ENCODE measurements at regions of chr12 and their contacts with region 1.

Region 1: DNA sequence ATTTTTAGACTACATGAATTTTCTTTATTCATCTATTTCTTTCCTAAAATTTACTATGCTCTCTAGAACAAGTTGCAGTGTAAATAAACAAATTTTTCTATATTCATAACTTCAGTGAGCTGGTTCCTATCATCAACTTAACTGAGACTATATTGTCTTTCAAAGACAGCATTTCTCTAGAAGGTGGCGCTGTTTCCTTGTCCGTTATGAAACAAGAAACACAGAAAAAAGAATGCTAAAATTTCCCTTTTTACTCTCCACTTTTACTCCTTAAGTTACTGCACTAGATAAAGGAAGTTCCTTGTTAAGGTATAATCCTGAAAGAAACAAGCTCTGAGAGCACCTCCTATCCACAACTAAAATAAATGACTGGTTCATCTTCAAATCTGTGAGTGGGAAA is 8.2 kb upstream of the CLEC2A start:
- DNase-seq: peak; percentile 48
- ATAC-seq: no peak
- H3K4me3 Mint-ChIP-seq: no peak overlapping the region
- H3K27ac Mint-ChIP-seq: no peak overlapping the region
- H3K4me1 Mint-ChIP-seq: peaks cover 19% of the 10 kb centered on the region
- H3K27me3 Mint-ChIP-seq: peaks cover 13% of the 10 kb centered on the region

Region 2: DNA sequence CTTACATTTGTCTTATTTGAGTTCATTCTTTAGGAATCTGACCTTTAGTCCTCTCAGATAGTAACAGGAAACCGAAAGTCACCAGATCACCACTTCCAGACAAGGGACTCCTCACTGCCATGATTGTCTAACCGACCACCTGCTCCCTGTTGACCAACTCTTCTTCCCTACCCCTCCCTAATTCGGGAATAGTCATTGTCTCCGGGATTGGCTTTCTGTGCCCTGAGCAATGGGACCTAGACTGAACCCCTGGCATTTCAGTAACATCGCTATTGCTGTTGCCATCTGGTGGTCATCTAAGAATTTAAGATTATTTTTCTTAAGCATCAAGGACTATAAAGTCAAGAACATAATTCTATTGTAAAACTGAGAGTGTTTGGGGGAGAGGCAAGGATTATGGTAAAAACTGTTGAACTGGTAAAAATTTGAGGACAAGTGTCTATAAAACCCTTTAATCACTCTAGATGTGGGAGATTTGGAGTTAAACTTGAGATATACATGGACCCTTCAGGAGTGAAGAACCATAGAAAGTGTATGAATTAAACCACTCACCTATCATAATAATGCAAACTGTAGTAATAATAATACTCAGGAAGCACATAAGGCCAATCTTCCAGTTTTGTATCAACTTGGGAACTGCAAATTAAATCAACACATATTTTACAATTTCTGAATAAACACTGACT is 14.5 kb before region 1 on chr12:
- CTCF ChIA-PET with region 1: interaction called, 24 read pairs
- POLR2A ChIA-PET with region 1: no interaction called
- DNase-seq: peak; percentile 33
- ATAC-seq: peak; percentile 69
- H3K4me3 Mint-ChIP-seq: peak overlapping the region; percentile 60
- H3K27ac Mint-ChIP-seq: peak overlapping the region; percentile 77
- H3K4me1 Mint-ChIP-seq: peaks cover 37% of the 10 kb centered on the region
- H3K27me3 Mint-ChIP-seq: peaks cover 7% of the 10 kb centered on the region

Region 3: DNA sequence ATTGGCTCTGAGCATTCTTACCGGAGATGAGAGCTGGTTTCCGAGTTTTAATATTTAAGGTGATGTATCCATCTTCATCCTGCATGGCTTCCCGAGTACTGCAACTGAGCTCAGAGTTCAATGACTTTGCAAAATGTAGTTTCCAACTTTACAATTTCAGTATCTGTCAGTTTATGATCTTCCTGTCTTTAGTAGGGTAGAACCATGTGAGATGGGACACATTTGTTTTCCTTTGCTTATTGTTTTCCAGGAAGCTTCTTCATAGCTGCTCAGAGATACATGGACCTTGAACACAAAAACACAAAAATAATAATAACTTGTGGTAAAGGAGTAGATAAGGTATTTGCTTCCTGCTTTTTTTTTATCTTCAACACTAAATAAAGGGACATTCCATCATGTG is 58.6 kb after region 1 on chr12 and contains the start of gene CLEC1B:
- CTCF ChIA-PET with region 1: interaction called, 11 read pairs
- POLR2A ChIA-PET with region 1: no interaction called
- DNase-seq: no peak
- ATAC-seq: no peak
- H3K4me3 Mint-ChIP-seq: no peak within 1 kb of the TSS
- H3K27ac Mint-ChIP-seq: no peak within 1 kb of the TSS
- H3K4me1 Mint-ChIP-seq: no peaks in the 10 kb centered on the region
- H3K27me3 Mint-ChIP-seq: peaks cover 43% of the 10 kb centered on the region
- total RNA-seq, gene CLEC1B: not detected

Region 4: GRCh38 chr12:10012630-10013330 is 72.4 kb after region 1 on chr12:
- CTCF ChIA-PET with region 1: interaction called, 59 read pairs
- POLR2A ChIA-PET with region 1: no interaction called
- DNase-seq: no peak
- ATAC-seq: no peak
- H3K4me3 Mint-ChIP-seq: no peak overlapping the region
- H3K27ac Mint-ChIP-seq: no peak overlapping the region
- H3K4me1 Mint-ChIP-seq: no peaks in the 10 kb centered on the region
- H3K27me3 Mint-ChIP-seq: peaks cover 36% of the 10 kb centered on the region